PC-9 (cell line): ENCODE measurements at regions of chr20 and their contacts with region 1.

Region 1: GRCh38 chr20:51372176-51372803 is 170.2 kb downstream of the NFATC2 start:
- DNase-seq: peak; percentile 52 to 76
- H3K4me3 ChIP-seq: no peak overlapping the region
- H3K27ac ChIP-seq: no peak overlapping the region
- H3K4me1 ChIP-seq: peaks cover 7% of the 10 kb centered on the region
- H3K27me3 ChIP-seq: no peaks in the 10 kb centered on the region
- CTCF ChIP-seq: peak; percentile 92

Region 2: GRCh38 chr20:51412333-51412871 is 40.1 kb after region 1 on chr20:
- CTCF ChIA-PET with region 1: no interaction called
- POLR2A ChIA-PET with region 1: no interaction called
- intact Hi-C with region 1: no loop called
- DNase-seq: no peak
- H3K4me3 ChIP-seq: no peak overlapping the region
- H3K27ac ChIP-seq: no peak overlapping the region
- H3K4me1 ChIP-seq: no peaks in the 10 kb centered on the region
- H3K27me3 ChIP-seq: no peaks in the 10 kb centered on the region
- CTCF ChIP-seq: no peak

Region 3: GRCh38 chr20:51456511-51457509 is 84.5 kb after region 1 on chr20:
- CTCF ChIA-PET with region 1: no interaction called
- POLR2A ChIA-PET with region 1: interaction called, 8 read pairs
- intact Hi-C with region 1: loop called (anchors 2 kb)
- DNase-seq: peak; percentile 93 to 100
- H3K4me3 ChIP-seq: peak overlapping the region; percentile 51; the same call in 1 of the 2 replicates
- H3K27ac ChIP-seq: peak overlapping the region; percentile 84
- H3K4me1 ChIP-seq: peaks cover 26% of the 10 kb centered on the region
- H3K27me3 ChIP-seq: no peaks in the 10 kb centered on the region
- CTCF ChIP-seq: no peak

Region 4: GRCh38 chr20:51595058-51595532 is 222.8 kb after region 1 on chr20:
- CTCF ChIA-PET with region 1: interaction called, 6 read pairs
- POLR2A ChIA-PET with region 1: interaction called, 7 read pairs
- intact Hi-C with region 1: loop called (anchors 1 kb)
- DNase-seq: peak; percentile 71 to 79
- H3K4me3 ChIP-seq: no peak overlapping the region
- H3K27ac ChIP-seq: no peak overlapping the region
- H3K4me1 ChIP-seq: peaks cover 10% of the 10 kb centered on the region
- H3K27me3 ChIP-seq: no peaks in the 10 kb centered on the region
- CTCF ChIP-seq: peak; percentile 93

Region 5: GRCh38 chr20:51624157-51624731 is 252.0 kb after region 1 on chr20:
- CTCF ChIA-PET with region 1: no interaction called
- POLR2A ChIA-PET with region 1: no interaction called
- intact Hi-C with region 1: loop called (anchors 1 kb)
- DNase-seq: peak; percentile 53 to 76
- H3K4me3 ChIP-seq: no peak overlapping the region
- H3K27ac ChIP-seq: no peak overlapping the region
- H3K4me1 ChIP-seq: no peaks in the 10 kb centered on the region
- H3K27me3 ChIP-seq: no peaks in the 10 kb centered on the region
- CTCF ChIP-seq: peak; percentile 87

Region 6: DNA sequence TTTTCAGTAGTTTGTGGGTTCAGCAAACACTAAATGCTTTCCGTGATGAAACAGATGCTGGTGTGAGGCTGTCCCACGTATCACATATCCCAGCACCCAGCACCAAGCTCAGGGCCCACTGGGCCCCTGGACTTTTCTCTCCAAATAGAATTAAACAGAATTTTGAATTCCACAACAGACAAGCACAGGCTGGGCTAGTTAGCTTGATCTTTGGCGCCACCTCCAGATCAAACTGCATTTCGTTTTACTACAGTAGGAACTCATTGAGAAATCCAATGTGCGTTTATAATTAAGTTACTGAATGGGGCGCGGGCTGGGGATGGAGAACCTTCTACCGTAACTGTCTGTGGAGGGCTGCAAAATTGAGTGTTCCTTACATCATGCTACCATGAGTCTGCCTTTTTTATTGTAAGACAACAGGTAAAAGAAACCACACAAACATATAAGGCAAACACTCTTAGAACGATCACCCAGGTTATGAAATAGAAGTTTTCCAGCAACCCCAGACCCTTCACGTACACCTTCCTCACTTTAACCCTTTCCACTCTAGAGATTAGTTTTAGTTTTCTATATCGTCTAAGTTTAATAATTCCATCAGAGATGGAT is 711.4 kb after region 1 on chr20:
- CTCF ChIA-PET with region 1: no interaction called
- POLR2A ChIA-PET with region 1: no interaction called
- intact Hi-C with region 1: loop called (anchors 1 kb)
- DNase-seq: peak; percentile 34 to 48
- H3K4me3 ChIP-seq: no peak overlapping the region
- H3K27ac ChIP-seq: peak overlapping the region; percentile 33; the same call in 1 of the 2 replicates
- H3K4me1 ChIP-seq: peaks cover 13% of the 10 kb centered on the region
- H3K27me3 ChIP-seq: no peaks in the 10 kb centered on the region
- CTCF ChIP-seq: peak; percentile 82